ENCODE measurements at regions of chr6 and their contacts with region 1.

Region 1: DNA sequence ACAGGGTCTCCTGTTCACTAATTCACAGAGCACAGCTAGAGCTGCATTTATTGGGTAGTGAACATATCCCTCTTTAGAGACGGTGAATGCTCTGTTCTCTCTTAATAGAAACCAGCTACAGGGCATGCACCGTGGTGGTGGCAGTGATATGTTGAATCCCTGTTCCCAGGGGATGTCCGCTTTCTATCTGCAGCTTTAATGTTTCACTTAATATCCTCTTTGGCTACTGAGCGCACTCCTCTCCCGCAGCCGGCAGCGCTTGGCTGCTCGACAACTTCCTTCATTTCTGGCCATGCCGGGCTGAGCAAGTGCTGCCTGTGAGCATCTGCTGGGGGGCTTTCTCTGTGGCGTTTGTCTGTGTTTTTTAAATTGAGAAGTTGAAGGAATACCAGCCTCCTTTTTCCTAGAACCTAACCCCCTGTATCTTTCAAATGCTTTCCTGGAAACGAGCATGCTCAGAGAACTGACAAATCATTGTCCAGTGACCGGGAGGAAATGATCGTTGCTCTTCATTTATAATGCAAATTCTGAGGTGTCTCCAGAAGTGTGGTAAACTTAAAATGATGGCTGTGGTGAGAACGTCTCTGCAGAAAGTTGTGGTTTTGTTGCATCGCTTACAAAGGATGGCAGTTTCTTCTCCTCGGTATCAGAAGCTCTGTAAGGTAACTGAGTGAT is 297.9 kb downstream of the UTRN start:
- DNase-seq: peak; percentile 54
- ATAC-seq: peak; percentile 89
- H3K4me3 Mint-ChIP-seq: peak overlapping the region; percentile 71
- H3K27ac Mint-ChIP-seq: peak overlapping the region; percentile 86
- H3K4me1 Mint-ChIP-seq: peaks cover 39% of the 10 kb centered on the region
- H3K27me3 Mint-ChIP-seq: no peaks in the 10 kb centered on the region

Region 2: DNA sequence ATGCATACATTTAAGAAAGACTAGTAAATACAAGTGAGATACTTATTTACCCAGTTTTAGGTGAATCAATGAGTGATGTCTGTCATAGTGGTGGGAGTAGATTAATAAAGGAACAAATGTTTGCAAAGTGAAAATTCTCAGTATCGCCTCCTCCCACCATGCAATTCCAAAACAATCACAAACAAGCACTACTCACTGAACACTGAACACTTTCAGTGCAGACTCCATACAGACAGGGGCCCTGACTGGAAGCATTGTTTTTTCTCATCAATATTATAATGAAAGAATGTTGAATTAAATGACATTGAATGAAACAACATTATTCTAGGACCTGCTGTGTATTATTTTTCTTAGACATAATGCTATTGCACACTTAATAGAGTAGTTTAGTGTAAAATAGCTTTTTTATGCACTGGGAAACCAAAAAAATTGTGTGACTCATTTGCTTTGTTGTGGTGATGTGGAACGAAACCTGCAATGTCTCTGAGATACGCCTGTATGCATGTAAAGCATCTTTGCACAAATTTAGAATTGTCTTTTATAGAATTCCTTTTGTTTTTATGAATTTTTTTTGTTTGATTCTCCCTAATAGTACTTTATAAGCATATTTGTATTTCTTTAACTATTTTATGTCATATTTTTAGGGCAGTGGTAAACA is 19.6 kb after region 1 on chr6:
- CTCF ChIA-PET with region 1: interaction called, 89 read pairs
- POLR2A ChIA-PET with region 1: interaction called, 4 read pairs
- intact Hi-C with region 1: loop called (anchors 1 to 2 kb)
- DNase-seq: peak; percentile 42
- ATAC-seq: peak; percentile 84
- H3K4me3 Mint-ChIP-seq: no peak overlapping the region
- H3K27ac Mint-ChIP-seq: no peak overlapping the region
- H3K4me1 Mint-ChIP-seq: peaks cover 49% of the 10 kb centered on the region
- H3K27me3 Mint-ChIP-seq: no peaks in the 10 kb centered on the region

Region 3: GRCh38 chr6:144778773-144779492 is 195.9 kb after region 1 on chr6:
- CTCF ChIA-PET with region 1: interaction called, 4 read pairs
- POLR2A ChIA-PET with region 1: no interaction called
- intact Hi-C with region 1: loop called (anchors 5 to 10 kb)
- DNase-seq: no peak
- ATAC-seq: no peak
- H3K4me3 Mint-ChIP-seq: no peak overlapping the region
- H3K27ac Mint-ChIP-seq: no peak overlapping the region
- H3K4me1 Mint-ChIP-seq: peaks cover 2% of the 10 kb centered on the region
- H3K27me3 Mint-ChIP-seq: no peaks in the 10 kb centered on the region

Region 4: GRCh38 chr6:145028144-145028818 is 445.2 kb after region 1 on chr6:
- CTCF ChIA-PET with region 1: interaction called, 5 read pairs
- POLR2A ChIA-PET with region 1: no interaction called
- intact Hi-C with region 1: loop called (anchors 1 kb)
- DNase-seq: no peak
- ATAC-seq: peak; percentile 79
- H3K4me3 Mint-ChIP-seq: no peak overlapping the region
- H3K27ac Mint-ChIP-seq: no peak overlapping the region
- H3K4me1 Mint-ChIP-seq: no peaks in the 10 kb centered on the region
- H3K27me3 Mint-ChIP-seq: peaks cover 12% of the 10 kb centered on the region

Region 5: GRCh38 chr6:145633981-145634627 is 1051.0 kb after region 1 on chr6:
- CTCF ChIA-PET with region 1: no interaction called
- POLR2A ChIA-PET with region 1: no interaction called
- intact Hi-C with region 1: loop called (anchors 1 to 2 kb)
- DNase-seq: peak; percentile 91
- ATAC-seq: peak; percentile 92
- H3K4me3 Mint-ChIP-seq: no peak overlapping the region
- H3K27ac Mint-ChIP-seq: no peak overlapping the region
- H3K4me1 Mint-ChIP-seq: no peaks in the 10 kb centered on the region
- H3K27me3 Mint-ChIP-seq: no peaks in the 10 kb centered on the region

Measured in activated CD4-positive, alpha-beta T cell treated with anti-CD3 and anti-CD28 coated beads for 36 hours (primary cell).